IMR-90 (cell line): ENCODE measurements at regions of chr14 and their contacts with region 1.

Region 1: GRCh38 chr14:26281280-26281992 is 316.4 kb downstream of the NOVA1 start:
- DNase-seq: peak; percentile 87
- ATAC-seq: peak; percentile 79
- H3K4me3 ChIP-seq: no peak overlapping the region
- H3K27ac ChIP-seq: peak overlapping the region; percentile 99; the same call in 1 of the 2 replicates
- H3K4me1 ChIP-seq: peaks cover 6% of the 10 kb centered on the region
- H3K27me3 ChIP-seq: no peaks in the 10 kb centered on the region
- CTCF ChIP-seq: no peak
- POLR2A ChIP-seq: no peak
- RAD21 ChIP-seq: no peak

Region 2: GRCh38 chr14:26528415-26529182 is 247.2 kb after region 1 on chr14:
- CTCF ChIA-PET with region 1: no interaction called
- POLR2A ChIA-PET with region 1: no interaction called
- dilution Hi-C with region 1: no loop called
- in situ Hi-C with region 1: no loop called
- intact Hi-C with region 1: loop called (anchors 10 kb)
- DNase-seq: peak; percentile 15
- ATAC-seq: no peak
- H3K4me3 ChIP-seq: no peak overlapping the region
- H3K27ac ChIP-seq: no peak overlapping the region
- H3K4me1 ChIP-seq: 0 out of 2 replicates have a peak, but pooled peaks cover 2% of the 10 kb centered on the region
- H3K27me3 ChIP-seq: no peaks in the 10 kb centered on the region
- CTCF ChIP-seq: no peak
- POLR2A ChIP-seq: no peak
- RAD21 ChIP-seq: no peak

Region 3: DNA sequence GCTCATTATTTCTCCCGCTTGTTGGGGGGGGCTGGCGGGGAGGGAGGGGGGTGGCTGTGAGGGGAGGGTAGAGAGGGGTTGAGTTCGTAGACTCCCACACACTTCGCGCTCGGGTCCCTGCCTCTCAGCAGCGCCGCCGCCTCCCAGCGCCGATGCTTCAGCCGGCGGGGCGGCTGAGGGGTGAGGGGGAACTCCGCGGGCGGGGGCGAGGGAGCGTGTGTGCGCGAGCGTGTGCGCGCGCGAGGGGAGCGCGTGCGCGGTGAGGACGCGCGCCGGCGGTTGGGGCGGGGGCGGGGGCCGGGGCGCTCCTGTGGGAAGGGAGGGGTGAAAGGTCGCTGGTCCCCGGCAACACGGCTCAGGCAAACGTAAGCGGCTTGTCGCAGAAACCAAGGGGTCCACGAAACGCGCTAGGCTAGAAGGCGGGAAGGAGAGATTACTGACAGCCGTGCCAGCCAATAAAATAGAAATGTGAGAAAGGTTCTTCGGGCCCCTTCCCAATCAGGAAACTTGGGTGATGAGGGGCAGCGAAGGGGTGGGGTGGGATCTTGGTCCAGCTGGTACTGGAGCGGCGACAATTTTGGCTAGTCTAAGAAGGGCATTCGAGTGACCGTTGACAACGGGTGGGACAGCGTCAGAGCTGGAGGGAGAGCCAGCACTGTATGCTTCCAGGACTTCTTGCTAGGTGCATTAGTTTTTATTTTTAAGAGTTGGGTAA is 316.8 kb after region 1 on chr14:
- CTCF ChIA-PET with region 1: no interaction called
- POLR2A ChIA-PET with region 1: no interaction called
- dilution Hi-C with region 1: no loop called
- in situ Hi-C with region 1: no loop called
- intact Hi-C with region 1: loop called (anchors 10 kb)
- DNase-seq: peak; percentile 82
- ATAC-seq: peak; percentile 85
- H3K4me3 ChIP-seq: peak overlapping the region; percentile 95
- H3K27ac ChIP-seq: no peak overlapping the region; the same call in 1 of the 2 replicates
- H3K4me1 ChIP-seq: no peaks in the 10 kb centered on the region
- H3K27me3 ChIP-seq: peaks cover 8% of the 10 kb centered on the region
- CTCF ChIP-seq: no peak
- POLR2A ChIP-seq: no peak
- RAD21 ChIP-seq: no peak